GM23248 (cell line): ENCODE measurements at regions of chr3 and their contacts with region 1.

Region 1: GRCh38 chr3:9362731-9363530 is at the start of gene THUMPD3:
- DNase-seq: peak; percentile 96
- H3K4me3 ChIP-seq: peak within 1 kb of the TSS; percentile 78
- H3K27ac ChIP-seq: peak within 1 kb of the TSS; percentile 97
- H3K4me1 ChIP-seq: peaks cover 4% of the 10 kb centered on the region; the same call in 1 of the 2 replicates
- H3K27me3 ChIP-seq: no peaks in the 10 kb centered on the region
- total RNA-seq, gene THUMPD3: 38.9 and 41.7 TPM in 2 replicates

Region 2: GRCh38 chr3:9649791-9650521 is 287.0 kb after region 1 on chr3:
- in situ Hi-C with region 1: loop called (anchors 25 kb)
- DNase-seq: peak; percentile 17
- H3K4me3 ChIP-seq: peak overlapping the region; percentile 90
- H3K27ac ChIP-seq: no peak overlapping the region
- H3K4me1 ChIP-seq: 0 out of 2 replicates have a peak, but pooled peaks cover 4% of the 10 kb centered on the region
- H3K27me3 ChIP-seq: no peaks in the 10 kb centered on the region

Region 3: GRCh38 chr3:10286596-10287330 is 923.8 kb after region 1 on chr3:
- in situ Hi-C with region 1: no loop called
- DNase-seq: peak; percentile 41
- H3K4me3 ChIP-seq: no peak overlapping the region
- H3K27ac ChIP-seq: no peak overlapping the region
- H3K4me1 ChIP-seq: peaks cover 8% of the 10 kb centered on the region
- H3K27me3 ChIP-seq: no peaks in the 10 kb centered on the region